ENCODE measurements at regions of chr16 and their contacts with region 1.

Region 1: DNA sequence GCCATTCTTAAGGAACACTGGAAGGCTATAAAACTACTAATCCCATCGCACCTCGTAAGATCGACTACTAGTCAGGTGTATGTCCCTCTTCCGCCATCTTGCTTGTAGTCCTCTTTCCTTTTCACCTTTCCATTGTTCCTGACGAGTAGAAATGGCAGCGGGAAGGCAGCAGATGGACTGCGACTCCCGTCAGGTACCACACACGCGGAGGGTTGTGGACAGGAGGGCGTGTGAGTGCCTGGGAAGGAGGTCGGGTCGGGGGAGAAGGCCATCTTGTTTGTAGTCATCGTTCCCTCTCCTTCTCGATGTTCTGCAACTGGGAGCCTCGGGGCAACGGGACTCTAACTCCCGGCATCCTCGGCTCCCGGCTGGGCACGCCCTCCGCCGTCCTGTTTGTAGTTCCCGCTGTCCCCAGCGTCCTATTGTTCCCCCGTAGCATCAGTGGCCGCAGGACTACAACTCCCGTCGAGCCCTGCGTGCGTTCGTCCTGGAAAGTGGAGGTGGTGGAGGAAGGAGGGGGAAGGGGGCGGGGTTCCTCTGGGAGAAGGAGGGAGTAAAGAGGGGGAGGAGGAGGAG is 324 bp upstream of the FBXL19 start:
- DNase-seq: peak; percentile 98
- H3K4me3 Mint-ChIP-seq: peak overlapping the region; percentile 99
- H3K27ac Mint-ChIP-seq: peak overlapping the region; percentile 100
- H3K4me1 Mint-ChIP-seq: peaks cover 10% of the 10 kb centered on the region
- H3K27me3 Mint-ChIP-seq: no peaks in the 10 kb centered on the region

Region 2: DNA sequence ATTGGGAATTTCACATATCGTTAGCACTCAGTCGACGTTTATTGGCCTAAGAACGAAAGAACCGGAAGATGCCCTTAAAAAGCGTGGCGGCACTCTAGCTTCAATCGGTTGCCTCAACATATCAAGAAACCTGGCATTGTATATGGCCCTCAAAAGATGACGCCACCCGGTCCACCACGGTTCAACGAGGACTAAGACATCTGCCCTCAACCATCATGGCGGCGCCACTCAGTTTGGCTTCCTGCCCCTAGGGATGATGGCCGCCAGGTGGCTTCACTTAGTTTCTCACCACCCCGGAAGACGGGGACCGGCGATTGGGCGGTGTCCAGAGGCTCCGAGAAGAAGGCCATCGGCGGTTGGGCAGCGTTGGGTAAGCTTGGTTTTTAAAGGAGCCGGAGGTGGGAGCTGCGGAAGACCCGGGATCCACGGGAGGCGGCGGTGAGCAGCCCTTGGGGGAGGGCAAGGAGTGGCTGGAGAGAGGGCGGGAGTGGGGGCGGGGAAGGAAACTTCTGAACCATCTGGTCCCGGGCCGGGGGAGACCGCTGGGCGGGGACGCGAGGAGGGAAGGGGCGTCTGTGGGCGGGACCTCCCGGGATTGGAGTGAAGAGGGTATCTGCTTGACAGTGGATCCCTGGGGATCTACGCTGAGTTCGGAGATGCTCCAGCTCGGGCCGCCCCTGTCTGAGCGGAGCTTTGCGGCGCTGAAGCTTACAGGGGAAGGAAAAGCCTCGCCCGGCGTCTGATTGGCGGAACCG is 272.5 kb before region 1 on chr16 and contains the start of gene PRR14:
- CTCF ChIA-PET with region 1: no interaction called
- POLR2A ChIA-PET with region 1: no interaction called
- intact Hi-C with region 1: loop called (anchors 2 kb)
- DNase-seq: peak; percentile 100
- H3K4me3 Mint-ChIP-seq: peak within 1 kb of the TSS; percentile 92
- H3K27ac Mint-ChIP-seq: peak within 1 kb of the TSS; percentile 96
- H3K4me1 Mint-ChIP-seq: peaks cover 21% of the 10 kb centered on the region
- H3K27me3 Mint-ChIP-seq: no peaks in the 10 kb centered on the region
- total RNA-seq, gene PRR14: 73.2 to 83.2 TPM

Region 3: DNA sequence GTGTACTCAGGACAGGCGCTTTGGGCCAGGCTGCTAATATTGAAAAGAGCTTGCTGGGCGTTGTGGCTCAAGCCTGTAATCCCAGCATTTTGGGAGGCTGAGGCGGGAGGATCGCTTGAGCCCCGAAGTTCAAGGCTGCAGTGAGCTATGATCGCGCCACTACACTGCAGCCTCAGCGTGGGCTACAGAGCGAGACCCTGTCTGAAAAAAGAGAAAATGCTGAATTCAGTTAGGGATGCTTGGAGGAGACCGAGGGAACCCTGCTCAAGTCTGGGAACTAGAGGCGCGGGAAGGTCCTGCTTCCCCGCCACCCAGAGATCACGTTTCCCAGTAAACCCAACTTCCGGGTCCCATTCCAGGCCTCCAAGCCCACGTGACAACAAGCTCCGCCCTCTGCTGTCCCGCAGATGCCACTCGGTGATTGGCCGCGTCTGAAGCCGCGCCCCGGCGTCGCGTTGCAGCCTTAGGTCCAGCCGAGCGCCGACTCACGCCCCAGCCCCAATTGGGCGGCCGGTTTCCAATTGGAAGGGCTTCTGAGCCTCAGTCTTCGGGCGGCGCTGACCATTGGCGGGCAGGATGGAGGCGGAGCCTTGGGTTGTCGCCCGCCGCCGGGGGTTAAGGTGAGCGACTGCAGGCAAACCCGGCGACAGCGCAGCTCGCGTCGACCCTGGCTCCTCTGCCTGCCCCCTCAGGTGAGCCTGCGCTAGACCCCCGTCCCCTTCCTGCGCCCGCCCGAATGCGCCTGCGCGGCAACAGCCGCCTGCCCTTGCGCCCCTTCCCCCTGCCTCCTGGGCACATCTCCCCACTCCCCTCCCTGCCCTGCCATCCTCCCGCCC is 175.0 kb before region 1 on chr16 and contains the start of gene PHKG2:
- CTCF ChIA-PET with region 1: no interaction called
- POLR2A ChIA-PET with region 1: no interaction called
- intact Hi-C with region 1: loop called (anchors 2 kb)
- DNase-seq: peak; percentile 99
- H3K4me3 Mint-ChIP-seq: peak within 1 kb of the TSS; percentile 91
- H3K27ac Mint-ChIP-seq: peak within 1 kb of the TSS; percentile 77
- H3K4me1 Mint-ChIP-seq: peaks cover 23% of the 10 kb centered on the region
- H3K27me3 Mint-ChIP-seq: no peaks in the 10 kb centered on the region
- total RNA-seq, gene PHKG2: 24.1 to 27.9 TPM

Region 4: GRCh38 chr16:30874821-30875717 is 48.0 kb before region 1 on chr16:
- CTCF ChIA-PET with region 1: no interaction called
- POLR2A ChIA-PET with region 1: no interaction called
- intact Hi-C with region 1: loop called (anchors 1 kb)
- DNase-seq: peak; percentile 93
- H3K4me3 Mint-ChIP-seq: peak overlapping the region; percentile 96
- H3K27ac Mint-ChIP-seq: peak overlapping the region; percentile 90
- H3K4me1 Mint-ChIP-seq: peaks cover 34% of the 10 kb centered on the region
- H3K27me3 Mint-ChIP-seq: no peaks in the 10 kb centered on the region

Region 5: GRCh38 chr16:30941600-30942425 is 18.8 kb after region 1 on chr16:
- CTCF ChIA-PET with region 1: interaction called, 7 read pairs
- POLR2A ChIA-PET with region 1: no interaction called
- intact Hi-C with region 1: loop called (anchors 2 kb)
- DNase-seq: peak; percentile 84
- H3K4me3 Mint-ChIP-seq: peak overlapping the region; percentile 32
- H3K27ac Mint-ChIP-seq: peak overlapping the region; percentile 72
- H3K4me1 Mint-ChIP-seq: peaks cover 18% of the 10 kb centered on the region
- H3K27me3 Mint-ChIP-seq: no peaks in the 10 kb centered on the region

Region 6: GRCh38 chr16:31458844-31459721 is 536.0 kb after region 1 on chr16 and contains the start of gene ARMC5:
- CTCF ChIA-PET with region 1: no interaction called
- POLR2A ChIA-PET with region 1: no interaction called
- intact Hi-C with region 1: loop called (anchors 1 kb)
- DNase-seq: peak; percentile 98
- H3K4me3 Mint-ChIP-seq: peak within 1 kb of the TSS; percentile 87
- H3K27ac Mint-ChIP-seq: peak within 1 kb of the TSS; percentile 94
- H3K4me1 Mint-ChIP-seq: peaks cover 48% of the 10 kb centered on the region
- H3K27me3 Mint-ChIP-seq: no peaks in the 10 kb centered on the region
- total RNA-seq, gene ARMC5: 5.5 to 6.4 TPM

Measured in activated CD4-positive, alpha-beta memory T cell treated with anti-CD3 and anti-CD28 coated beads for 36 hours (primary cell).